ENCODE measurements at regions of chr3 and their contacts with region 1.

Region 1: DNA sequence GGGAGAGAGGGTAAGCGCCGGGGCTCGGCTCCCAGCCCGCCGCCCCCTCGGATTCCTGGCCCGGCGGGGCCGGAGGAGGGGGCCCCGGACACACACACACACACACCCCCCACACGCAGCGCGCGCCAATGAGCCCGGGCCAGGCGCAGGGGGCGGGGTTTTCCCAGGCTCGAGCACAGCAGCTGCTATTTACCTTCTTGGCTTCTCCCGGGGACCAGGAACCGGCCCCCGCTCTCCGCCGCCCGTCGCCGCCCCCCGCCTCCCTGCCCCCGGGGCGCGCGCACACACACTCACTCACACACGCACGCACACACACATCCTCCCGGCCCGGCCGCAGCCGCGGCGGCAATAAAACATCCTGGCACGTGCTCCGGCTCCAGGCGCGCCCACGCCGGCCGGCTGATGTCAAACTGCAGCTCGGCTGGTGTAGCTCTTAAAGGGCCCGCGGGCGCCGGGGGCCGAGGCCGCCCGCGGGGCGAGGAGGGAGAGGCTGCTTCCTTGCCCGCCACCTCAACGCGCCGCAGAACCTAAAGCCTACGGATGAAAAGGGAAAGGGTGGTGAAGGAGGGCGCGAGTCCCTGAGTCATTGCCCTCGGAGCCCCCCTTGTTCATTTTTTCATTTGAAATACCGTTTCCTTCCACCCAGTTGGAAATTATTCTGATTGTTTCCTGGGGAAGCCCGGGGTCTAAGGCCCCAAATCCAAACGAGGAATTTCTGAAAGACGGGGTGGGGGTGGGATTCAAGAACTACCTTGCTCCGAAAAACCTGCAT is 1.0 kb upstream of the HES1 start:
- DNase-seq: peak; percentile 93
- H3K4me3 ChIP-seq: peak overlapping the region; percentile 50 to 73 (median 58)
- H3K27ac ChIP-seq: peak overlapping the region; percentile 95 to 97 (median 96)
- H3K4me1 ChIP-seq: peaks cover 11 to 76% (median 54%) of the 10 kb centered on the region in 4 donors
- H3K27me3 ChIP-seq: no peaks in the 10 kb centered on the region
- CTCF ChIP-seq: no peak
- EP300 ChIP-seq: peak; percentile 86
- POLR2A ChIP-seq: peak; percentile 64

Region 2: DNA sequence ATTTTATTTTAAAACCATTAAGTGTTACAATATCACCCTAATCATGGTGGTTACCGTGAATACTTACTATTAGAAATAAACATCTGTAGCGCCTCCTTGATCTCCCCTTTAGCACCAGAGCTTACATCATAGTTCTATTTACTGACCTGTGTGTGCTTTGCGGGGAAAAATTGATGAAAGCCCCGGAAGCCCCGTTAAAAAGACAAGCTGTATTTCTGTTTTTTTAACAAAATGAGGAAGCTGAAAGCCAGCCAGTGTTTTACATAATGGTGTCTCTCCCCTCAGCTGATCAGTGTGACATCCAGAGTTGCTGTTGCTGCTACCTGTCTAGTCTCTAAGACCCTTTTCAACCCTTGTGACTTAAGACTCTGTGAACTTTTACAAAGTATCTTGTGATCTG is 441.2 kb before region 1 on chr3:
- in situ Hi-C with region 1: no loop called
- intact Hi-C with region 1: no loop called
- DNase-seq: no peak
- H3K4me3 ChIP-seq: no peak overlapping the region
- H3K27ac ChIP-seq: no peak overlapping the region
- H3K4me1 ChIP-seq: peaks cover 0 to 5% (median 0%) of the 10 kb centered on the region in 4 donors
- H3K27me3 ChIP-seq: no peaks in the 10 kb centered on the region
- CTCF ChIP-seq: no peak
- EP300 ChIP-seq: no peak
- POLR2A ChIP-seq: no peak

Region 3: DNA sequence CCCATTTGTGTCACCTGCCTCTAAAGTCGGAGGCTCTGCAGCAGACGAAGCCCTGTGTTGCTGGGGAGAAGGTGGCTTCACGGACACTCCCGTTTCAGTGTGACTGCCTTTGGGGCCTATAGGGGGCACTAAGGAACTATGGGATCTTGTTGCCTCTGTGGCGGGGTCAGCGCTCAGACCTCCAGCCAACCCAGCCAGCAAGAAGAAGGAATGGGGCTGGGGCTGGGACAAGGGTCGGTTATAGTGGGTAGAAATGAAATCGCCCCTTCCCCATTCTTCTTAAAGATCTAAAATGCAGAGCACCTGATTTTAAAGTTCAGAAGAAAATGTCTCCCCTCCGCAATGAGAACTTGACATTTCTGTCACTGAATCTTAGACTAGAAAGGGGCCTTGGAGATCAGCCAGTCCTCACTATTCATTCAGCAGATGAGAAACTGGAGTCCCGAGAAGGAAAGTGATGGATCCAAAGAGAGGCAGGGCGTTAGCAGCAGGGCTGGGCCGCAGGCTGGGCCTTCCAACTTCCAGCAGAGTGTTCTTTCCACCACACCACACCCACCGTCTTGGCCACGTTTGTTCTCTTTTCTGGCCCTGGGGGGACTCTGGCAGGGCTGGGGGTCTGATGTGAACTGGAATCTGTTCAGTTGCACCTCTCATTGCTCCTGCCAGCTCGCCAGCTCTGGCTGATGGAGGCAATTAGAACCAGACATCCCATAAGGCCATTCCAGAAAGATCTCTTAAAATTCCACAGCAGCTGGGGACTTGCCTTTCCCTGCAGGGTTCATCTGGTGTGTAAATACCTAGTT is 346.6 kb before region 1 on chr3:
- in situ Hi-C with region 1: loop called (anchors 5 to 25 kb)
- intact Hi-C with region 1: loop called (anchors 5 kb)
- DNase-seq: peak; percentile 54
- H3K4me3 ChIP-seq: no peak overlapping the region
- H3K27ac ChIP-seq: peak overlapping the region in 3 of 4 donors; percentile 18 to 44 (median 25)
- H3K4me1 ChIP-seq: peaks cover 0 to 23% (median 13%) of the 10 kb centered on the region in 4 donors
- H3K27me3 ChIP-seq: no peaks in the 10 kb centered on the region
- CTCF ChIP-seq: peak; percentile 69 to 86 (median 75)
- EP300 ChIP-seq: no peak
- POLR2A ChIP-seq: no peak

Region 4: GRCh38 chr3:193997228-193998122 is 137.5 kb before region 1 on chr3:
- in situ Hi-C with region 1: no loop called
- intact Hi-C with region 1: loop called (anchors 10 kb)
- DNase-seq: no peak
- H3K4me3 ChIP-seq: no peak overlapping the region
- H3K27ac ChIP-seq: peak overlapping the region in 3 of 4 donors; percentile 19 to 55 (median 44)
- H3K4me1 ChIP-seq: peaks cover 9 to 23% (median 17%) of the 10 kb centered on the region in 4 donors
- H3K27me3 ChIP-seq: no peaks in the 10 kb centered on the region
- CTCF ChIP-seq: no peak
- EP300 ChIP-seq: no peak
- POLR2A ChIP-seq: no peak

Region 5: GRCh38 chr3:194265483-194265892 is 130.5 kb after region 1 on chr3:
- in situ Hi-C with region 1: no loop called
- intact Hi-C with region 1: loop called (anchors 5 kb)
- DNase-seq: peak; percentile 60
- H3K4me3 ChIP-seq: no peak overlapping the region
- H3K27ac ChIP-seq: peak overlapping the region; percentile 62 to 79 (median 70)
- H3K4me1 ChIP-seq: peaks cover 13 to 25% (median 21%) of the 10 kb centered on the region in 4 donors
- H3K27me3 ChIP-seq: no peaks in the 10 kb centered on the region
- CTCF ChIP-seq: no peak
- EP300 ChIP-seq: no peak
- POLR2A ChIP-seq: no peak